ENCODE measurements at regions of chr5 and their contacts with region 1.

Region 1: DNA sequence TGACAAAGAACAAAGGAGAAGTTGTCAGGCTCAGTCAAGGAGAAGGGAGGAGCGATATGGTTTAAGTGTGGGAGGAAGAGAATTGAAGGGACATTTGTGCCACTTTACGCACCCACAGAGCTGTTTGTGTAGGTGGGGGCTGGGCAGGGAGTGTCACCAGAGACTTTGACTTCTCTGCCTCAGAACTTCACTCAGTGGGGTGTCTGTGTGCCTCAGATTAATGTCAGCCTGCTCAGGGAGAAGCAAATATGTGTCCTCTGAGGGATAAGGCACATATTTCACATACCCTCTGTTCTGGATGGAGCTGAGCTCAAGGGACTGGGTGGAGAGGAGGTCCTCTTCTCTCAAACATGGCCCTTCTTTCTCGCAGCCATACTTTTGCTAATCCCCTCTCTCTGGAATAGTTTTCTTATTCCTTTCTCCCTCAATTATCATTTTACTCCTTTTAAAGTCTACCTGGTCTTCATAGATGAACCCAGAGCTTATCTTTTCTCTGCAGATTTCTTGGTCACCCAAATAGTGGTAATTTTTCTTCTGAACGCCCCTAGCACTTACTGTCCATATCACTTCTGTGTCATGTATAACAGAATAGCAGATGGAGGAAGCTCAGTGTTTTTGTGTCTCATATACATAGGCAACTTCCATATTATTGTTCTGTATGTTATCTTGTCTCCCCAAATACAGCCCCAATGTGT is 77.0 kb downstream of the IQGAP2 start:
- DNase-seq: no peak
- H3K4me3 ChIP-seq: no peak overlapping the region
- H3K27ac ChIP-seq: no peak overlapping the region
- H3K4me1 ChIP-seq: no peaks in the 10 kb centered on the region
- H3K27me3 ChIP-seq: no peaks in the 10 kb centered on the region
- CTCF ChIP-seq: no peak

Region 2: DNA sequence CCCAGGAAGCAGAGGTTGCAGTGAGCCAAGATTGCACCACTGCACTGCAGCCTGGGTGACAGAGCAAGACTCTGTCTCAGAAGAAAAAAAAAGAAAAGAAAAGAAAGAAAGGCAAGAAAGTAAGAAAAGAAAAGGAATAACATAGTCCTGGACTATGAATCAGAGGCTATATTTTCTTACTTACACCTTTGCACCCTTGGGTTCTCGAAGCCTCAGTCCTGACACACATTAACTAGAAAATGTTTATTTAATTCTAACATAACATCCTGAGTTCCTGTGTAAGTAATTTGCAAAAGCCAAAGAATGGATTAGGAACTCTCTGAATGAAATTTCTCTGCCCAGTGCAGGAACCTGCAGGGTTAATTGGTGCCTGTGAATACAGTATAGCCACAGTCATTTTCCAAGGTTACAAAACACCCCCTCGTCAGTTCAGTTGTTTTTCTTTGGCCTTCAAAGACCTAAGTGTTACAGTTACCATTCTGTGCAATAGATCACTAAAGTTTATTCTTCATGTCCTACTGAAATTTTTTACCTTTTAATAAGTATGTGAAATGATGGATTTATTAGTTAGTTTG is 249.3 kb before region 1 on chr5:
- CTCF ChIA-PET with region 1: no interaction called
- dilution Hi-C with region 1: no loop called
- in situ Hi-C with region 1: no loop called
- intact Hi-C with region 1: no loop called
- DNase-seq: no peak
- H3K4me3 ChIP-seq: no peak overlapping the region
- H3K27ac ChIP-seq: no peak overlapping the region
- H3K4me1 ChIP-seq: no peaks in the 10 kb centered on the region
- H3K27me3 ChIP-seq: peaks cover under 1% of the 10 kb centered on the region
- CTCF ChIP-seq: no peak

Region 3: DNA sequence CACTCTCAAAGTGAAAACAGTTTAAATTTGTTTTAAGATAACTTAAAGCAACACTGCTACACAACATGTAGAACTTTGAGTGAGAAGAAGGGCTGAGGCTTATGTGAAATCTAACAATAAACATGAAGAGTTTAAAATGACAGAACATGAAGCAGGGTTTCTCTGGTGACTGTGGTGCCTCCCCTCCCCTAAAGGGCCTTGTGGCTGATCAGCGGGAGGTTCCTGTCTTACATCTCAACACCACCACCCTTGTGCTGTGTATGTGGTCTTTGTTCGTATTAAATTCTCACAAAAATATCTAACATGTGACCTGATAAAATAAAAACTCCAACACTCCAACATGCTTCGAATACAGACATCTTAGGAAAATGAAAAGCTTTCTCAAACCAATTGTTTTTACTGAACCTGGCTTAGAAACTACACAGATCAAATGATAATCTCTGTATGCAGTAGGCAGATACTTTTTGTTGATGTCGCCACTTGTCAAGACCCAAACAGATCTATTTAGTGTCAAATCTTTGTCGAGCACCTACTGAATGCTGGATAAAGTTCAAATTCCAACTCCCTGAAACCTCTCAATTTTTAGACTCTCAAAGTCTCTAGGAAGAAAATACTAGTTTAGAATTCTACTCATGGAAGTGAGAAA is 87.0 kb before region 1 on chr5:
- CTCF ChIA-PET with region 1: no interaction called
- dilution Hi-C with region 1: no loop called
- in situ Hi-C with region 1: no loop called
- intact Hi-C with region 1: no loop called
- DNase-seq: no peak
- H3K4me3 ChIP-seq: no peak overlapping the region
- H3K27ac ChIP-seq: no peak overlapping the region
- H3K4me1 ChIP-seq: no peaks in the 10 kb centered on the region
- H3K27me3 ChIP-seq: peaks cover 2% of the 10 kb centered on the region
- CTCF ChIP-seq: no peak

Region 4: DNA sequence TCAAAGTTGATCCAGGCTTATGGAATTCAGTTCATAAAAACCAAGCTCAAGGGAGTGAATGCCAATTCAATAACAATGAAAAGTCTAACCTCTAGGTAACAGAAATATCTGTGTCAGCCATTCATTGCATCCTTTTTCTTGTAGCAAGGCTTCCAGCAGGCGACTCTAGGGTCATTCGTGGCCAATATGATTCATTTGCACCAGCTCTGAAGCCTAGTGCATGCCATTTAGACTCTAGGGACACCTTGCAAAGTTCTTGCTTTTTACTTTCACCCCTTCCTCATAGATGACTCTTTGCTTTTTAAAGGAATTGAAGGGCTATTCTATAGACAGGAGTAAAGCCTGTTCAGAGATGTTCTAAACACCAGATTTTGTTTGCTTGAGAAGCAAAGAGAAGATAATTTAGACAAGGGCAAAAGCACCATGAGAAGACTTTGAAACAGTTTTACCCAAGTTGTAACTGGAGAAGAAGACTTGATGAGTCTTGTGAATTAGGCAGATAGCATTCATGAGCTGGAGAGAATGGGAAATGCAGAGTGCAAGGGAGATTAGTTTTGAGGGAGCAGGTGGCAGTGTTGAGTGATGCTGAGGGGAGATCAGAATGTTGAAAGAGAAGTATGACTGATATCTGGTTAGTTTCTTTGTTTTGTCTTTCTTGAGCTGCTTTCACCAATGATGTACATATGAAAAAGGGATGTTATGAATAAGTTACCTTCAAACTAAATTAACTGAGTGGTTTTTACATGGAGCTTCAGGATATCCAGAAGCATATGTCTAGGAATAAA is 48.6 kb after region 1 on chr5:
- CTCF ChIA-PET with region 1: no interaction called
- dilution Hi-C with region 1: no loop called
- in situ Hi-C with region 1: no loop called
- intact Hi-C with region 1: no loop called
- DNase-seq: no peak
- H3K4me3 ChIP-seq: no peak overlapping the region
- H3K27ac ChIP-seq: no peak overlapping the region
- H3K4me1 ChIP-seq: peaks cover 6% of the 10 kb centered on the region
- H3K27me3 ChIP-seq: peaks cover 2% of the 10 kb centered on the region
- CTCF ChIP-seq: no peak

Region 5: GRCh38 chr5:76560952-76561891 is 81.1 kb after region 1 on chr5:
- CTCF ChIA-PET with region 1: no interaction called
- dilution Hi-C with region 1: no loop called
- in situ Hi-C with region 1: no loop called
- intact Hi-C with region 1: loop called (anchors 10 kb)
- DNase-seq: no peak
- H3K4me3 ChIP-seq: no peak overlapping the region
- H3K27ac ChIP-seq: no peak overlapping the region
- H3K4me1 ChIP-seq: no peaks in the 10 kb centered on the region
- H3K27me3 ChIP-seq: peaks cover 11% of the 10 kb centered on the region
- CTCF ChIP-seq: no peak